ENCODE measurements at regions of chr7 and their contacts with region 1.

Region 1: GRCh38 chr7:55280031-55280454 is 85.1 kb upstream of the LANCL2 start:
- DNase-seq: peak; percentile 49 to 61 (median 55)
- H3K4me3 ChIP-seq: no peak overlapping the region
- H3K4me3 Mint-ChIP-seq: no peak overlapping the region
- H3K27ac ChIP-seq: no peak overlapping the region
- H3K27ac Mint-ChIP-seq: peak overlapping the region in 3 of 7 donors; percentile 79 to 83 (median 83)
- H3K4me1 ChIP-seq: no peaks in the 10 kb centered on the region
- H3K4me1 Mint-ChIP-seq: no peaks in the 10 kb centered on the region
- H3K27me3 ChIP-seq: no peaks in the 10 kb centered on the region
- H3K27me3 Mint-ChIP-seq: no peaks in the 10 kb centered on the region

Region 2: GRCh38 chr7:55351263-55351662 is 71.2 kb after region 1 on chr7:
- CTCF ChIA-PET with region 1: no interaction called
- POLR2A ChIA-PET with region 1: no interaction called
- intact Hi-C with region 1: no loop called
- DNase-seq: no peak
- H3K4me3 ChIP-seq: no peak overlapping the region
- H3K4me3 Mint-ChIP-seq: no peak overlapping the region
- H3K27ac ChIP-seq: no peak overlapping the region
- H3K27ac Mint-ChIP-seq: no peak overlapping the region
- H3K4me1 ChIP-seq: no peaks in the 10 kb centered on the region
- H3K4me1 Mint-ChIP-seq: peaks cover 0 to 4% (median 4%) of the 10 kb centered on the region in 4 donors
- H3K27me3 ChIP-seq: no peaks in the 10 kb centered on the region
- H3K27me3 Mint-ChIP-seq: peaks cover 3% of the 10 kb centered on the region in 2 donors

Region 3: GRCh38 chr7:55415173-55415778 is 135.2 kb after region 1 on chr7:
- CTCF ChIA-PET with region 1: interaction called, 174 read pairs
- POLR2A ChIA-PET with region 1: interaction called, 5 read pairs
- intact Hi-C with region 1: no loop called
- DNase-seq: peak; percentile 73 to 78 (median 76)
- H3K4me3 ChIP-seq: no peak overlapping the region
- H3K4me3 Mint-ChIP-seq: no peak overlapping the region
- H3K27ac ChIP-seq: no peak overlapping the region
- H3K27ac Mint-ChIP-seq: peak overlapping the region in 5 of 7 donors; percentile 4 to 59 (median 42)
- H3K4me1 ChIP-seq: no peaks in the 10 kb centered on the region
- H3K4me1 Mint-ChIP-seq: peaks cover 2 to 4% (median 3%) of the 10 kb centered on the region in 4 donors
- H3K27me3 ChIP-seq: no peaks in the 10 kb centered on the region
- H3K27me3 Mint-ChIP-seq: no peaks in the 10 kb centered on the region

Region 4: GRCh38 chr7:55423277-55423711 is 143.3 kb after region 1 on chr7:
- CTCF ChIA-PET with region 1: interaction called, 174 read pairs
- POLR2A ChIA-PET with region 1: no interaction called
- intact Hi-C with region 1: no loop called
- DNase-seq: no peak
- H3K4me3 ChIP-seq: no peak overlapping the region
- H3K4me3 Mint-ChIP-seq: no peak overlapping the region
- H3K27ac ChIP-seq: no peak overlapping the region
- H3K27ac Mint-ChIP-seq: no peak overlapping the region
- H3K4me1 ChIP-seq: no peaks in the 10 kb centered on the region
- H3K4me1 Mint-ChIP-seq: no peaks in the 10 kb centered on the region
- H3K27me3 ChIP-seq: no peaks in the 10 kb centered on the region
- H3K27me3 Mint-ChIP-seq: no peaks in the 10 kb centered on the region

Region 5: DNA sequence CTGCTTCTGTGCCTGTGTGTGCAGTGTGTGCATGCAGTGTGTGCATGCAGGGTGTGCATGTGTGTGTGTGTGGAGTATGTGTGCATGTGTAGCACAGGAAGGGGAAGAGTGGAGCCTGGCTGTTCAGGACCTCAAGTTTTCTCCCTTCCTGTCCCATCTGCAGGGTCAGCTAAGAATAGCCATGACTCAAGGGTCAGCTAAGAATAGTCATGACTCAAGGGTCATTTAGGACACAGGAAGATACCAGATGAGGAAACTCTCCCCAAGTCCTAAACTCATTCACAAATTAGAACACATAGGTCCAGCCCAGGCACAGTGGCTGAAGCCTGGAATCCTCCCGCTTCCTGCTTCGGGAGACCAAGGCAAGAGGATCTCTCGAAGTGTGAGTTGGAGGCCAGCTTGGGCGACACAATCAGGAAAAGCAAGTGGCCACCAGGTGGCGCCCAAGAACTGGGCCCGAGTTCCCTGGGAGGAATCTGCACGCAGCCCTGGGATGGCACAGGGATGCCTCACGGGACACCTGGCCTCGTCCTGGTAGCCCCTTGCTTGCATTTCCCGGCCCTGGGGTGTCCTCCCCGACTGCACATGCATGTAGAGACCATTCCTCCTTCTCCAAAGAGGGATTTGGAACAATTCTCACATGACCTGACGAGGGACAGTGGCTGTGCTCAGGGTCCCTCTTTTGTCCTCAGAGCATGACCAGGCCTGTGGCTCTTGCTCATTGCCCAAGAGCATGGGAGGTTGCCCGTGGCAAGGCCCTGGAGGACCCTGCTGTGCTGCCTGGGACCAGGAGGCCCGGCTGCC is 313.7 kb after region 1 on chr7:
- CTCF ChIA-PET with region 1: interaction called, 4 read pairs
- POLR2A ChIA-PET with region 1: no interaction called
- intact Hi-C with region 1: loop called (anchors 1 kb)
- DNase-seq: peak; percentile 50 to 67 (median 55)
- H3K4me3 ChIP-seq: no peak overlapping the region
- H3K4me3 Mint-ChIP-seq: no peak overlapping the region
- H3K27ac ChIP-seq: no peak overlapping the region
- H3K27ac Mint-ChIP-seq: no peak overlapping the region
- H3K4me1 ChIP-seq: peaks cover 17% of the 10 kb centered on the region
- H3K4me1 Mint-ChIP-seq: peaks cover 7 to 24% (median 15%) of the 10 kb centered on the region in 4 donors
- H3K27me3 ChIP-seq: no peaks in the 10 kb centered on the region
- H3K27me3 Mint-ChIP-seq: peaks cover 4 to 6% of the 10 kb centered on the region in 2 donors

Measured in CD4-positive, alpha-beta memory T cell (primary cell).